Tibial artery (tissue), 4 donors: ENCODE measurements at regions of chr7 and their contacts with region 1.

Region 1: DNA sequence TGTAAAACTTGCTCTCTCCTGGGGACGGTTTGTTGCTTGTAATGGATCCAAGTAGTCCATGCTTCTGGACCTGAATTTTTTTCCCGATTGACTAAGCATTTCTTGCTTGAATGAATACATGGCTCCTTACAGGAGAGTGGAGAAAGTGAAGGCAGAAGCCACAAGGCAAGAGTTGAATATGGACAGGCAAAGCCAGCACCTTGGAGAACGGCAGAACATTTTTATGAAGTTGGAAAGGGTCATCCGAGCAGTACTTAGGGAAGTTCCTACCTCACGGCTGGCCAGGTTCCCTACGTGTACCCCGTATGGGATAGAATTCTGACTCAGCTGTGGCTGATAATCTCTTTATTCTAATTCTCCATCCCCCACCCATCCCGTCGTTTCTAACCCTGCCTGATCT is 50.6 kb upstream of the MGAM2 start:
- DNase-seq: no peak
- H3K4me3 ChIP-seq: no peak overlapping the region
- H3K27ac ChIP-seq: no peak overlapping the region
- H3K4me1 ChIP-seq: no peaks in the 10 kb centered on the region
- H3K27me3 ChIP-seq: no peaks in the 10 kb centered on the region
- CTCF ChIP-seq: no peak

Region 2: DNA sequence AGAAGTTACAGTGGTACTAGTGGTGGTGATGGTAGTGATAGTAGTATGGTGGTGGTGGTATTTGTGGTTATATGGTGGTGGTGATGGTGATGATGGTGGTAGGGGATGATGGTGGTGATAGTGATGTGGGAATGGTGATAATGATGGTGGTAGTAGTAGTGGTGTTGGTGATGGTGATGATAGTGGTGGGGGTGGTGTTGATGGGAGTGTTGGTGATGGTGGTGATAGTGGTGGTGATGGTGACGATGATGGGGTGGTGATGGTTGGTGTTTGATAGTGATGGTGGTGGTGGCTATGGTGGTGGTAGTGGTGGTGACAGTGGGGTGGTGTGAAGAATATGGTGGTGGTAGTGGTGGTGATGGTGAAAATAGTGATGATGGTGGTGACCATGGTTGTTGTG is 22.7 kb after region 1 on chr7:
- intact Hi-C with region 1: loop called (anchors 2 kb)
- DNase-seq: no peak
- H3K4me3 ChIP-seq: no peak overlapping the region
- H3K27ac ChIP-seq: no peak overlapping the region
- H3K4me1 ChIP-seq: no peaks in the 10 kb centered on the region
- H3K27me3 ChIP-seq: no peaks in the 10 kb centered on the region
- CTCF ChIP-seq: no peak